Vagina (tissue), 2 donors: ENCODE measurements at regions of chr1 and their contacts with region 1.

Region 1: DNA sequence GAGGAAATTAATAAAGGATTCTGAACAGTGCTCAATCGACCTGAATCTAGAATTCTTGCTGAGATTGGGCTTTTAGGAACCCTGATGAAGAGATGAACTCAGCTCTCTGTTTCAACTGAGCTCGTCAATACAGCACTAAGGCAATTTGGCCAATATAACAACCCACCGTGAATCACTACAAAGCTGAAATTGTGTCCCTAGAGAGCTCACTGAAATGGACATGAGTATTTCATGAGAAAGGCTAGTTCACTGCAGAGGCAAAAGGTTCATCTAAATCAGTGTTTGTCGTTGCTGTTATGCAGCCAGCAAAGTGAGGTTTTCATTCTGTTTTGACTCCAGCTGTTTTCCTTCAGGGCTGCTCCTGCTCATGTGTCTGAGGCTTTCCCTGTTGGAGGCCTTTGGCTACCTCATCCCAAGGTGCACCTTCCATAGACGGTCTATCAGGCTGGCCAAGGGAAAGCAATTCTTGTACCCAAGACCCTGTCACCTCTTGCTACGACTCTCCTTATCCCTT is 83.5 kb downstream of the URB2 start:
- DNase-seq: no peak
- H3K4me3 ChIP-seq: no peak overlapping the region
- H3K27ac ChIP-seq: no peak overlapping the region
- H3K4me1 ChIP-seq: no peaks in the 10 kb centered on the region
- H3K27me3 ChIP-seq: no peaks in the 10 kb centered on the region
- CTCF ChIP-seq: no peak
- POLR2A ChIP-seq: no peak

Region 2: DNA sequence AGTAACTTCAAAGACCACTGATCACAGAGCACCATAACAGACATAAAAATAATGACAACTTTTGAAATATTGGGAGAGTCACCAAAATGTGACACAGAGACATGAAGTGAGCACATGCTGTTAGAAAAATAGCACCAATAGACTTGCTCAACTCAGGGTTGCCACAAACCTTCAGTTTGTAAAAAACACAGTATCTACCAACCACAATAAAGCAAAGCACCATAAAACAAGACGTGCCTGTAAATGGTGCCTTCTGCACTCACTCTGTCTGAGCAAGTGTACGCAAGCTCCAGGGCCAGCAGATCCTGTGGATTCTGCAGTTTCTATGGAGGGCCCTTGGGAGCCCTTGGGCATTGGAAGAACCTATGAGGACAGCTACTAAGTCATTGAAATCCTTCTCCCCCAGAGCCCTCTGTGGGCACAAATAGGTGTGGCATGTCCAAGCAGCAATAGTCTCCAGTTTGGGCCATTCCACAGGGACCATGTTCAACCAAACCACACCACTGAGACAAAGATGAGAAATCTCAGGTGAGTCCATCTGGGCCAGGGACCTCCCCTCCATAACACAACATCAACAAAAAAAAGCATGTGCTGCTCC is 555.5 kb before region 1 on chr1:
- intact Hi-C with region 1: loop called (anchors 5 kb)
- DNase-seq: no peak
- H3K4me3 ChIP-seq: no peak overlapping the region
- H3K27ac ChIP-seq: no peak overlapping the region
- H3K4me1 ChIP-seq: no peaks in the 10 kb centered on the region
- H3K27me3 ChIP-seq: no peaks in the 10 kb centered on the region
- CTCF ChIP-seq: no peak
- POLR2A ChIP-seq: no peak